Heart right ventricle (tissue), 16 donors: ENCODE measurements at regions of chr1 and their contacts with region 1.

Region 1: DNA sequence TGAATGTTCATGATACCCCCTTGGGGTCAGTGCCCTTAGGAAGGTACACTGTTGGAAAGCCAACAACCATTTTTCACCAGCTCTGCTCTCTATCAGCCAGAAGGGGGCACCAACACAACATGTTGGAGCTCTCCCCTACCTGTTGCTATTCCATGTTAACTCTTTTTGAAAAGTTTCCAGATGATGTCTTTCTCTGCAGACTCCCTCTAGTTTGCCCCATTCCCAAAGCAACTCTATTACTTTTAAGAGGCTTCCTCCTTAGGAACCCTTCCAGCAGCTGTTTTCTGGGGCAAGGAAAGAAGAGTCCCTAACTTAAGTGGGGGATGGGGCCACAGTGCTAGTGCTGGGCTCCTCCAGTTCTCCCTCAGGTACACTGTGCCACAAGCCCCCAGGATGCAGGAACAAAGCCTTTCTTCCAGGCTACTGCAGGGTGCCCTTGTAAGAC is 22.9 kb upstream of the NDC1 start:
- DNase-seq: peak in 1 of 2 donors; percentile 28
- ATAC-seq: peak in 6 of 8 donors; percentile 51 to 72 (median 64)
- H3K4me3 ChIP-seq: no peak overlapping the region
- H3K27ac ChIP-seq: no peak overlapping the region
- H3K4me1 ChIP-seq: no peaks in the 10 kb centered on the region
- H3K27me3 ChIP-seq: no peaks in the 10 kb centered on the region
- CTCF ChIP-seq: peak; percentile 43 to 82 (median 74)

Region 2: GRCh38 chr1:53951697-53952096 is 90.7 kb after region 1 on chr1:
- intact Hi-C with region 1: loop called in 2 of 10 experiments (anchors 5 kb)
- DNase-seq: no peak
- ATAC-seq: no peak
- H3K4me3 ChIP-seq: no peak overlapping the region
- H3K27ac ChIP-seq: no peak overlapping the region
- H3K4me1 ChIP-seq: peaks cover 0 to 48% (median 25%) of the 10 kb centered on the region in 9 donors
- H3K27me3 ChIP-seq: no peaks in the 10 kb centered on the region
- CTCF ChIP-seq: no peak

Region 3: GRCh38 chr1:54037476-54037875 is 176.5 kb after region 1 on chr1:
- intact Hi-C with region 1: loop called in 1 of 10 experiments (anchors 10 kb)
- DNase-seq: no peak
- ATAC-seq: peak in 4 of 8 donors; percentile 62 to 78 (median 68)
- H3K4me3 ChIP-seq: no peak overlapping the region
- H3K27ac ChIP-seq: no peak overlapping the region
- H3K4me1 ChIP-seq: peaks cover 0 to 11% (median 0%) of the 10 kb centered on the region in 9 donors
- H3K27me3 ChIP-seq: no peaks in the 10 kb centered on the region
- CTCF ChIP-seq: no peak

Region 4: GRCh38 chr1:54800899-54801759 is 940.1 kb after region 1 on chr1 and contains the start of gene TTC22:
- intact Hi-C with region 1: loop called in 1 of 10 experiments (anchors 10 kb)
- DNase-seq: no peak
- ATAC-seq: peak in 6 of 8 donors; percentile 58 to 76 (median 66)
- H3K4me3 ChIP-seq: peak within 1 kb of the TSS in 9 of 10 donors; percentile 1 to 62 (median 35)
- H3K27ac ChIP-seq: peak within 1 kb of the TSS in 1 of 10 donors; percentile 74
- H3K4me1 ChIP-seq: peaks cover 0 to 39% (median 9%) of the 10 kb centered on the region in 9 donors
- H3K27me3 ChIP-seq: peaks cover 0 to 59% (median 34%) of the 10 kb centered on the region in 7 donors
- CTCF ChIP-seq: peak in 4 of 9 donors; percentile 28 to 37 (median 34)
- total RNA-seq, gene TTC22: 0.13 to 1.0 (median 0.17) TPM in 5 of 10 donors, not detected in the others